Naive thymus-derived CD4-positive, alpha-beta T cell (primary cell): ENCODE measurements at regions of chr13 and their contacts with region 1.

Region 1: DNA sequence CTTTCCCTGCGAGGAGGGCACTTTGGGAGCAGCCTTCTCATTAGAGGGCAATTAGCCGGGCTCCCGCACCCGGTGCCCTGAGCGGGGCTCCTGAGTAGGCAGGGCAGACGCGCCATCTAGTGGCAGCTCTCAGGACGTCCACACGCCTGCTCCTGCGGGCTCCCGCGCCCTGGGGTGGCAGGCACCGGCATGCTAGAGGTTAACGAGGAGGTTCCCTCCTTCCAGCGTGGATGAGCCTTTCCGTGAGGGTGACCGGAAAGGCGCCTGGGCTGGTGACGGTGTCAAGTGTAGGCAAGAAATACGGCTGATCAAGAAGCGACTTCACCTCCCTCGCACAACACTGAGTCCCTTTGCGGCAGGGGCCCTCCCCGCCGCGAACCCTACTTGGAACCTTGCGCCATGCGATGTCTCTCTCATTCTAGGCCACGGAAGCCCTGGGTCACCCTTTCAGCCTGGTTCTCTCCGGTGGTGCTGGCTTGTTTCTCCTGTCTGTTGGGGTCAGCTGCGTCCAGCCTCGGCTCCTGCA is 67.7 kb downstream of the ALOX5AP start:
- DNase-seq: peak; percentile 54 to 83 (median 70)
- ATAC-seq: peak; percentile 97
- H3K4me3 ChIP-seq: peak overlapping the region; percentile 27
- H3K4me3 Mint-ChIP-seq: peak overlapping the region; percentile 17 to 75 (median 51)
- H3K27ac ChIP-seq: no peak overlapping the region
- H3K27ac Mint-ChIP-seq: peak overlapping the region in 1 of 9 donors; percentile 12
- H3K4me1 ChIP-seq: peaks cover 3 to 7% of the 10 kb centered on the region in 2 donors
- H3K4me1 Mint-ChIP-seq: peaks cover 5 to 19% (median 10%) of the 10 kb centered on the region in 7 donors
- H3K27me3 ChIP-seq: no peaks in the 10 kb centered on the region
- H3K27me3 Mint-ChIP-seq: peaks cover 0 to 5% (median 0%) of the 10 kb centered on the region in 5 donors

Region 2: DNA sequence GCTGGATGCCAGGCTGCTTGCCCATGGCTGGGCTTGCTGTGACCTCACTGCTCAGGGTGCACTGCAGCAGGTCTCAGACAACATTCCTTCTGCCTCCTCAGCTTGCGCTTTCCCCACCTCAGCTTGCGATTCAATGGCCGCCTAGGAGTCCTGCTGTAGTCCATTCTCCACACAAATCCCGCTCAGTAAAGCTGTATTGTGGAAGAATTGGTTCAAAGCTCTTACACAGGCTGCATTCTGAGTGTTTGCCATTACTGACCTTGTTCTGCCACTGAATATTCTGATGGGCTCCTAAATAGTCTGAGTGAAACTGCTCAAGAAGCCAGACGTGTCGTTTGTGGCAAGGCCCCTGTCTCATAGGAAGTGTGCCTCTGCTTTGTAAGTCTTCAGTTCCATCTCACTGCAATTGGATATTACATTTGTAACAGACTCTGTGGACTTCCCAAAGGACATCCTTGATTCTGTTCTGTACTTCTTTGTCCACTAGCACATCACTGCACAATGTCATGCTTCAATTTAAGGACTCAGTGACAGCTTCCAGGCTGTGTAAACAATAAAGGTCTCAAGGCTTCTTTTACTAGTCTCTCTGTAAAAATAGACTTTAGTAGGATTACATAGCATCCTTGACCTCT is 545.4 kb before region 1 on chr13:
- CTCF ChIA-PET with region 1: no interaction called
- POLR2A ChIA-PET with region 1: no interaction called
- intact Hi-C with region 1: loop called in 1 of 2 experiments (anchors 5 kb)
- DNase-seq: no peak
- ATAC-seq: no peak
- H3K4me3 ChIP-seq: no peak overlapping the region
- H3K4me3 Mint-ChIP-seq: no peak overlapping the region
- H3K27ac ChIP-seq: no peak overlapping the region
- H3K27ac Mint-ChIP-seq: peak overlapping the region in 2 of 9 donors; percentile 18 to 62
- H3K4me1 ChIP-seq: no peaks in the 10 kb centered on the region
- H3K4me1 Mint-ChIP-seq: peaks cover 0 to 21% (median 14%) of the 10 kb centered on the region in 7 donors
- H3K27me3 ChIP-seq: no peaks in the 10 kb centered on the region
- H3K27me3 Mint-ChIP-seq: no peaks in the 10 kb centered on the region

Region 3: GRCh38 chr13:30408319-30409101 is 394.5 kb before region 1 on chr13:
- CTCF ChIA-PET with region 1: no interaction called
- POLR2A ChIA-PET with region 1: no interaction called
- intact Hi-C with region 1: loop called in 1 of 2 experiments (anchors 2 kb)
- DNase-seq: peak; percentile 78 to 89 (median 85)
- ATAC-seq: peak; percentile 97
- H3K4me3 ChIP-seq: peak overlapping the region; percentile 44
- H3K4me3 Mint-ChIP-seq: peak overlapping the region; percentile 64 to 78 (median 72)
- H3K27ac ChIP-seq: peak overlapping the region; percentile 52
- H3K27ac Mint-ChIP-seq: peak overlapping the region; percentile 51 to 87 (median 83)
- H3K4me1 ChIP-seq: peaks cover 9 to 14% of the 10 kb centered on the region in 2 donors
- H3K4me1 Mint-ChIP-seq: peaks cover 6 to 46% (median 37%) of the 10 kb centered on the region in 7 donors
- H3K27me3 ChIP-seq: no peaks in the 10 kb centered on the region
- H3K27me3 Mint-ChIP-seq: peaks cover 0 to 12% (median 0%) of the 10 kb centered on the region in 5 donors

Region 4: GRCh38 chr13:30572859-30573275 is 230.1 kb before region 1 on chr13:
- CTCF ChIA-PET with region 1: interaction called, 3 read pairs
- POLR2A ChIA-PET with region 1: no interaction called
- intact Hi-C with region 1: loop called (anchors 2 kb)
- DNase-seq: peak in 7 of 9 donors; percentile 19 to 65 (median 49)
- ATAC-seq: peak; percentile 69
- H3K4me3 ChIP-seq: peak overlapping the region; percentile 55
- H3K4me3 Mint-ChIP-seq: peak overlapping the region; percentile 66 to 88 (median 81)
- H3K27ac ChIP-seq: peak overlapping the region; percentile 81
- H3K27ac Mint-ChIP-seq: peak overlapping the region; percentile 88 to 97 (median 94)
- H3K4me1 ChIP-seq: peaks cover 13 to 24% of the 10 kb centered on the region in 2 donors
- H3K4me1 Mint-ChIP-seq: peaks cover 14 to 42% (median 36%) of the 10 kb centered on the region in 7 donors
- H3K27me3 ChIP-seq: no peaks in the 10 kb centered on the region
- H3K27me3 Mint-ChIP-seq: peaks cover 0 to 3% (median 0%) of the 10 kb centered on the region in 5 donors

Region 5: GRCh38 chr13:30739761-30740642 is 63.0 kb before region 1 on chr13:
- CTCF ChIA-PET with region 1: interaction called, 3 read pairs
- POLR2A ChIA-PET with region 1: no interaction called
- intact Hi-C with region 1: loop called (anchors 1 kb)
- DNase-seq: peak in 8 of 9 donors; percentile 16 to 61 (median 32)
- ATAC-seq: peak; percentile 47
- H3K4me3 ChIP-seq: peak overlapping the region; percentile 29
- H3K4me3 Mint-ChIP-seq: peak overlapping the region; percentile 79 to 87 (median 82)
- H3K27ac ChIP-seq: no peak overlapping the region
- H3K27ac Mint-ChIP-seq: peak overlapping the region; percentile 7 to 93 (median 66)
- H3K4me1 ChIP-seq: peaks cover 59 to 60% of the 10 kb centered on the region in 2 donors
- H3K4me1 Mint-ChIP-seq: peaks cover 68 to 81% (median 79%) of the 10 kb centered on the region in 7 donors
- H3K27me3 ChIP-seq: no peaks in the 10 kb centered on the region
- H3K27me3 Mint-ChIP-seq: no peaks in the 10 kb centered on the region

Region 6: DNA sequence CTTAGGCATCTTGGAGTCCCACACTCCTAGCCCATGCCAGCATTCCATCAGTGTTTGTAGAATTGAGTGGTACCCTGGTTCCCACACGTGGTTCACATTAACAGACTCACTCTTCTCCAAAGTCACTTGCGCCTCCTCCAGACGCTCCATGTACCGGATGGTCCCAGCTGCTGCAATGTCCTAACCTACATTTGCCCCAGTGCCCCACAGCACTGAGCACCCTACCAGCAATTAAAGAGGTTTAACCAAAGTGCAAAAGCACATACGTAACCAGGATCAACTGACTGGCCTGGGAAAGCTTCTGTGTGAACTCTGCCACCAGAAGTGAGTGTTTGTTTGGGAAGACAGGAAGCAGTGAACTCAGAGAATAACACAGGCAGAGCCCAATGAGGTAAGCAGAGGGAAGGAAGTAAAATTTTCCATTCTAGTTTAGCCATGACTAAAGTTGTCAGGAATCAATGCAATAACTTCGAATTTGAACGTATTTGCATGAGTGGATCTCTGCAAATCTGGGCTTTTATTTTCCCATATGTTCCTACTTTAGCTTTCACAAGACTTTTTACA is 95.7 kb after region 1 on chr13:
- CTCF ChIA-PET with region 1: no interaction called
- POLR2A ChIA-PET with region 1: no interaction called
- intact Hi-C with region 1: no loop called
- DNase-seq: no peak
- ATAC-seq: peak; percentile 22
- H3K4me3 ChIP-seq: no peak overlapping the region
- H3K4me3 Mint-ChIP-seq: no peak overlapping the region
- H3K27ac ChIP-seq: no peak overlapping the region
- H3K27ac Mint-ChIP-seq: peak overlapping the region in 2 of 9 donors; percentile 27 to 51
- H3K4me1 ChIP-seq: no peaks in the 10 kb centered on the region
- H3K4me1 Mint-ChIP-seq: peaks cover 0 to 15% (median 7%) of the 10 kb centered on the region in 7 donors
- H3K27me3 ChIP-seq: no peaks in the 10 kb centered on the region
- H3K27me3 Mint-ChIP-seq: peaks cover 5 to 27% (median 13%) of the 10 kb centered on the region in 5 donors